H1 (cell line): ENCODE measurements at regions of chr2 and their contacts with region 1.

Region 1: DNA sequence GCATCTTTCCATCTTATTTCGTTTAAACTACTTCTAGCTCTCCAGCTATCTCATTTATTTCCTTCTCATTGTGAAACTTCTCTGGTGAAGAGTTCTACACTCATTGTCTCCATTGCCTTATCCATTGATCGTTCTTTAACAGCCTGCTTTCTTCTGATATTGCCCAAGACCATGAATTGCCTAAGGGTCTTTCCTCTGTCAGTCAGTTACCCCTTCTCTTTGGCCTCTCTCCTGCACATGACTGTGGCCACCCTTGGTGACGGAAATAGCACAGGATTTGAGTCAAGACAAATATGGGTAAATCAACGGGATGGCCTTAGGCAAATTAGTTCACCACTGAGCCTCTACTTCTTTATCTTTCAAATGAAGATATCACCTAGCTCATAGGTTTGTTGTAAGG is 26.6 kb downstream of the NHEJ1 start:
- DNase-seq: no peak
- H3K4me3 ChIP-seq: no peak overlapping the region
- H3K27ac ChIP-seq: no peak overlapping the region
- H3K4me1 ChIP-seq: no peaks in the 10 kb centered on the region; a peak in 1 of 7 replicates
- H3K27me3 ChIP-seq: no peaks in the 10 kb centered on the region
- CTCF ChIP-seq: no peak
- EP300 ChIP-seq: no peak
- POLR2A ChIP-seq: no peak
- RAD21 ChIP-seq: no peak

Region 2: GRCh38 chr2:219149667-219150066 is 15.7 kb after region 1 on chr2:
- CTCF ChIA-PET with region 1: interaction called, 12 read pairs
- POLR2A ChIA-PET with region 1: no interaction called
- DNase-seq: no peak
- H3K4me3 ChIP-seq: no peak overlapping the region
- H3K27ac ChIP-seq: no peak overlapping the region
- H3K4me1 ChIP-seq: no peaks in the 10 kb centered on the region
- H3K27me3 ChIP-seq: no peaks in the 10 kb centered on the region
- CTCF ChIP-seq: no peak
- EP300 ChIP-seq: no peak
- POLR2A ChIP-seq: no peak
- RAD21 ChIP-seq: no peak